Breast epithelium (tissue), 4 donors: ENCODE measurements at regions of chr1 and their contacts with region 1.

Region 1: DNA sequence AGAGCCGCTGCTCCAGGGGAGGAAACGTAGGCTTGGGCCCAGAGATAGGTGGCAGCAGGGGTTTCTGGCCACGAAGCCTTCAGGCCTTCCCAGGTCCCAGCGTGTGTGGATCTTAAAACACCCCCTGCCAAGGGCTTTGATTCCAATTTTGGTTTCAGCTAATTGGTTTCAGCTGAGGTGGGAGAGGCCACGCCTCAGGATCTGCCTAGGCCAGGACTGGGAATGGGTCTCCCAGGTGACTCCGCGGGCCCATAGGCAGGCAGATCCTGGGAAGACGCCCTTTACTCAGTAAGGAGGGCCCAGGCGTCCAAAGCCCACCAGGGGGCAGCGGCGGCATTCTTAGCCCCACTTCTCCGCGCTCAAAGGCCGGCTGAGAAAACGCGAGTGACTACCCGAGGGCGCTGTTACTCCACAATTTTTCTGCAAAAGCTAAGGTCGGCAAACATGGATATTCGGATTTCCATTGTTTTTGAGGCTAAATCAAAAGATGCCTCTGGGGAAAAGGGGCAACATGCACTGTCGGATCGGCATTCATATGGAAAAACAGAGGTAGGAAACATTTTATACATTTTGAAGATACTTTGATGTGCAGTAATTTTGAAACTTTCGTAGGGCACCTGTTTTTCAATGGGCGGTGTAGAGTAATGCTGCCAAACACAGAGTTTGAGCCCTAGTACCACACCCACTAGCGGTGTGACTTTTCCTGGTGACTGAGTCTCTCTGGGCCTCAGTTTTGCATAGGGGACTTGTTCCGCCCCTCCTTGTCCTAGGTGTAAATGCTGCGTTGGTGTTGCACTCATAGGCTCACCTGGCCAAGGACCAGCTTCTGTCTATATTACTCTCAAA is 31.8 kb upstream of the BCL10 start:
- DNase-seq: peak; percentile 75 to 89
- H3K4me3 ChIP-seq: no peak overlapping the region
- H3K27ac ChIP-seq: no peak overlapping the region
- H3K4me1 ChIP-seq: peaks cover 0 to 6% of the 10 kb centered on the region in 2 donors
- H3K27me3 ChIP-seq: no peaks in the 10 kb centered on the region
- CTCF ChIP-seq: peak; percentile 83 to 98 (median 94)
- POLR2A ChIP-seq: no peak

Region 2: DNA sequence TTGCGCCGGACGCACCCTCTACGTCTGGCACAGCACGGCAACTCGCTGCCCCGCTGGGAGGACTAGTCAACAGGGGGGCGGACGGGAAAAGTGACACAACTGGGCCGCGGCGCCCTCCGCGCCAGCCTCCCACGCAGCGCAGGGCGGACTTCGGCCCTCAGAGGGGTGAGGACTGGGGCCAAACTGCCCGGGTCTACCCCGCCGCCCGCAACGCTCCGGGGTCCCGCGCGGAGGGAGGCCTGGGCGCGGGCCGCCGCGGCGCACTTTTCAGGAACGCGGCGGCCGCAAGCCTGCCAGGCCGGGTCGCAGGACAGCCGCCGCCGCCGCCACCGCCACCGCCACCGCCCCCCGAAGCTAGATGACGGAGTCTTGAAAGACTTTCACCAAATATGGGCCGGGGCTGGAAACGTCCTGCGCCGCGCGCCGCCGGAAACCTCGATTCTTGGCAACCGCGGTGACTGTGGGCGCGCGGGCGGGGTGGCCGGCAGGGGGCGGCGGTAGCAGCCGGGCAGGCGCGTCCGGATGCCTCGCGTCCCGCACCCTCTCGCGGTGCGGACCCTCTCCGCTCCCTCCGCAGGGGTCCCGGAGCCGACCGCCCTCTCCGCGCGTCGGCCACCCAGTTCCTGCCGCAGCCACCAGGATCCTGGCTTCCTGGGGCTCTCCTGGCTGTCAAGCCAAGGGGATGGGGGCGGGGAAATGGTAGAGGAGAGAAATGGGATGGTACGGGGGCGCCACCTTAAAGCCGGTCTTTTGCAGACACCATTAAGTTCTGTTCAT is 268.6 kb after region 1 on chr1:
- intact Hi-C with region 1: loop called (anchors 10 kb)
- DNase-seq: peak; percentile 82 to 89
- H3K4me3 ChIP-seq: peak overlapping the region; percentile 73 to 86 (median 73)
- H3K27ac ChIP-seq: peak overlapping the region; percentile 99
- H3K4me1 ChIP-seq: peaks cover 0 to 6% of the 10 kb centered on the region in 2 donors
- H3K27me3 ChIP-seq: no peaks in the 10 kb centered on the region
- CTCF ChIP-seq: peak; percentile 34 to 90 (median 83)
- POLR2A ChIP-seq: peak; percentile 31

Region 3: DNA sequence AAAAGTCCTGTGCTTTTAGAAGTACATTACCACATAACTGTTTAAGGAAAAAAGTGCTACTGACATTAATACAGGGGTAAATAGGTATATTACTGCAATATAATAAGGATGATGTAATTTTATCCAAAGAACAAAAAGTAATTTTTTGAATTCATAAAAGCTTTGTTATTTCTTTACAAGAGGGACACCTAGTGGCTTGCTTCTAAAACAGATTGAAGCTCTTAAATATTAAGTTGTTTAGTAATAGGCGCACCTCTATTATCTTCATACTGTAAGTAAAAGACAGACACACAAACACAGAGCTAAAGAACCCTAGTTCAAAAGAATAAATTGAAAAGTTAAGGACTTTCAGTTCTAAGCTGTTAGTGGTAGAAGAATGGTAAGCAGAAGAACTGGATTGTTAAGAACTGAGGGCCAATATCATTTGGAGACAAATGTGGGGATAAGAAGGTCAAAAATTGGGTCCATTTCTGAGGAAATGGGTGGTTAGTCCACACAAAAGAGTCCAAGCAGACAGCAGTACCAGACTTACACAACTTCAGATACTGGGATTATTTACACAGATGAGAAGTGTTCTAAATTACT is 384.6 kb after region 1 on chr1:
- intact Hi-C with region 1: loop called (anchors 5 kb)
- DNase-seq: no peak
- H3K4me3 ChIP-seq: no peak overlapping the region
- H3K27ac ChIP-seq: no peak overlapping the region
- H3K4me1 ChIP-seq: no peaks in the 10 kb centered on the region
- H3K27me3 ChIP-seq: no peaks in the 10 kb centered on the region
- CTCF ChIP-seq: peak; percentile 17 to 52 (median 52)
- POLR2A ChIP-seq: no peak